ENCODE measurements at regions of chr11 and their contacts with region 1.

Region 1: GRCh38 chr11:59615637-59616395 is at the start of gene OSBP:
- DNase-seq: peak; percentile 99
- total RNA-seq, gene OSBP: 35.1 TPM

Region 2: GRCh38 chr11:59560702-59561469 is 54.9 kb before region 1 on chr11:
- intact Hi-C with region 1: loop called (anchors 5 kb)
- DNase-seq: peak; percentile 88